GM12878 (cell line): ENCODE measurements at regions of chr22 and their contacts with region 1.

Region 1: DNA sequence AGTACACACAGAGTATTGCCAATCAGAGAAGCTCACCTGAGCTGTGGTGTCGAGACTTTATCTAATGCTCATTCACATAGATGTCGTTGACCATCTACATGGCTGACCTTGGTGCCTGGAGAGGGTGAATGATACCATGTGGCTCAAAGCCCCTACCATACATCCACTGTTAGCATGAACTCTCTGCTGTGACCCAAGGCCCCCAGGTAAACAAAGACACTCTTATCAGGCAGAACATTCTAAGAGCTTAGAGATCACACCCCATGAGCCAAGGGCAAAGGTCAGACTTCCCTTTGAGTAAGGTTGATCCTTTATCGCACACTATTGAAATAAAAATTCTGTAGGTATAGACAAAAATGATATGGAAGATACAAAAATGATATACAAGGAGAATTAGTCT is 15.0 kb upstream of the PIWIL3 start:
- DNase-seq: no peak
- ATAC-seq: no peak
- H3K4me3 ChIP-seq: no peak overlapping the region
- H3K27ac ChIP-seq: no peak overlapping the region
- H3K4me1 ChIP-seq: no peaks in the 10 kb centered on the region
- H3K27me3 ChIP-seq: no peaks in the 10 kb centered on the region; a peak in 1 of 4 replicates
- CTCF ChIP-seq: no peak
- EP300 ChIP-seq: no peak
- POLR2A ChIP-seq: no peak
- RAD21 ChIP-seq: no peak

Region 2: GRCh38 chr22:24803011-24803542 is 13.6 kb after region 1 on chr22:
- CTCF ChIA-PET with region 1: interaction called, 18 read pairs
- POLR2A ChIA-PET with region 1: no interaction called
- RAD21 ChIA-PET with region 1: no interaction called
- SMC1A ChIA-PET with region 1: no interaction called
- in situ Hi-C with region 1: no loop called
- intact Hi-C with region 1: no loop called
- DNase-seq: no peak
- ATAC-seq: peak; percentile 68
- H3K4me3 ChIP-seq: no peak overlapping the region
- H3K27ac ChIP-seq: no peak overlapping the region
- H3K4me1 ChIP-seq: no peaks in the 10 kb centered on the region
- H3K27me3 ChIP-seq: peaks cover 0 to 7% of the 10 kb centered on the region in 2 experiments; a peak in 2 of 4 replicates
- CTCF ChIP-seq: peak; percentile 70 to 87 (median 85)
- EP300 ChIP-seq: no peak
- POLR2A ChIP-seq: no peak
- RAD21 ChIP-seq: no peak

Region 3: GRCh38 chr22:24859587-24859986 is 70.1 kb after region 1 on chr22:
- CTCF ChIA-PET with region 1: no interaction called
- POLR2A ChIA-PET with region 1: no interaction called
- RAD21 ChIA-PET with region 1: no interaction called
- SMC1A ChIA-PET with region 1: no interaction called
- in situ Hi-C with region 1: no loop called
- intact Hi-C with region 1: no loop called
- DNase-seq: no peak
- ATAC-seq: no peak
- H3K4me3 ChIP-seq: no peak overlapping the region
- H3K27ac ChIP-seq: no peak overlapping the region
- H3K4me1 ChIP-seq: no peaks in the 10 kb centered on the region
- H3K27me3 ChIP-seq: no peaks in the 10 kb centered on the region
- CTCF ChIP-seq: no peak
- EP300 ChIP-seq: no peak
- POLR2A ChIP-seq: no peak
- RAD21 ChIP-seq: no peak